ENCODE measurements at regions of chr4 and their contacts with region 1.

Region 1: DNA sequence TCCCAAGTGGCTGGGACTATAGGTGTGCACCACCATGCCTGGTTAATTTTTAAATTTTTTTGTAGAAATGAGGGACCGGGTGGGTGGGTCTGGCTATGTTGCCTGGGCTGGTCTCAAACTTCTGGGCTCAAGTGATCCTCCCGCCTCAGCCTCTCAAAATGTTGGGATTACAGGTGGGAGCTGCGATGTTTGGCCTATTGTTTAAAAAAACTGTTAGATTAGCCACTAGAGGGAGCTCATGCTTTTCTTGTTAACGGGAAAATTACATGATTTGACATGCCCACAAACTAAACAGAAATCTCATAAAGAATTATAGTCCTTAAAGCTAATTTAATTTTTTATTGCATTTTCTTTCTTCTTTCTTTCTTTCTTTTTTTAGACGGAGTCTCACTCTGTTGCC is 5.0 kb upstream of the SDAD1 start:
- DNase-seq: no peak
- H3K4me3 Mint-ChIP-seq: no peak overlapping the region
- H3K27ac Mint-ChIP-seq: no peak overlapping the region
- H3K4me1 Mint-ChIP-seq: peaks cover 6% of the 10 kb centered on the region
- H3K27me3 Mint-ChIP-seq: peaks cover 3% of the 10 kb centered on the region

Region 2: DNA sequence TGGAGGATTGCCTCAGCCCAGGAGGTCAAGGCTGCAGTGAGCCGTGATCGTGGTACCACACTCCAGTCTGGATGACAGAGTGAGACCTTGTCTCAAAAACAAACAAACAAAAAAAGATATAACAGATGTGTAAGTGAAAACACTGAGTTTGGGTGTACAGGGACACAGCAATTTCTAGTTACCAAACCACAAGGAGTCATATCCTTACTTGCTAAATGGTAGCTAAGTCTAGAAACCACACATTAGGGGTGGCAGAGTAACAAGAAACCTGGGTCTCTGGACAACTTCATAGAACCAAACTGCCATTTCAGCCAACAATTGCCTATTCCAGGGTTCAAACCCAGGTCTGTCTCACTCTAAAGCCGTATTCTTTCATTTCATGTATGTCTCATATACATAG is 114.3 kb before region 1 on chr4:
- CTCF ChIA-PET with region 1: no interaction called
- POLR2A ChIA-PET with region 1: no interaction called
- intact Hi-C with region 1: no loop called
- DNase-seq: no peak
- H3K4me3 Mint-ChIP-seq: no peak overlapping the region
- H3K27ac Mint-ChIP-seq: no peak overlapping the region
- H3K4me1 Mint-ChIP-seq: no peaks in the 10 kb centered on the region
- H3K27me3 Mint-ChIP-seq: no peaks in the 10 kb centered on the region

Region 3: GRCh38 chr4:76036855-76037254 is 41.1 kb after region 1 on chr4:
- CTCF ChIA-PET with region 1: interaction called, 13 read pairs
- POLR2A ChIA-PET with region 1: no interaction called
- intact Hi-C with region 1: no loop called
- DNase-seq: no peak
- H3K4me3 Mint-ChIP-seq: no peak overlapping the region
- H3K27ac Mint-ChIP-seq: no peak overlapping the region
- H3K4me1 Mint-ChIP-seq: peaks cover 3% of the 10 kb centered on the region
- H3K27me3 Mint-ChIP-seq: no peaks in the 10 kb centered on the region

Region 4: DNA sequence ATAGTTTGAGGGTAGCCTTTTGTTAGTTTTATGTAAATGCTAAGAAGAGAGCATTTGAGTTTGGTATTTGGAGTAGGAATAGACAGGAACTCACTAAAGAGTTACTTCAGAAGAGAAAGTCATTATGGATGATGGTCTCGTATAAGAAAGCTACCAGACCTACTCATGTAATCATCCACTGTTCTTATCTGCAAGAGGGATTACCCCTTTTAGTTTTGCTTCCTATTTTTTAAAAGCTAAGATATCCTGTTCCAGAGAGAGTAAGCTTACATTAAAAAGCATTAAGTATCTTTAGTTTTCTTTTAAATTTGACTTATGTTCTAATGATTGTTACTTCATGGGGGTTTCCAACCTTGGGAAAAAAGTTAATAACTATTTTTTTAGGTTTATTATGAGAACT is 66.3 kb after region 1 on chr4:
- CTCF ChIA-PET with region 1: interaction called, 93 read pairs
- POLR2A ChIA-PET with region 1: interaction called, 4 read pairs
- intact Hi-C with region 1: loop called (anchors 1 kb)
- DNase-seq: no peak
- H3K4me3 Mint-ChIP-seq: no peak overlapping the region
- H3K27ac Mint-ChIP-seq: no peak overlapping the region
- H3K4me1 Mint-ChIP-seq: peaks cover 48% of the 10 kb centered on the region
- H3K27me3 Mint-ChIP-seq: peaks cover 18% of the 10 kb centered on the region

Region 5: GRCh38 chr4:76074468-76074867 is 78.7 kb after region 1 on chr4 and contains the start of gene ART3:
- CTCF ChIA-PET with region 1: interaction called, 54 read pairs
- POLR2A ChIA-PET with region 1: interaction called, 4 read pairs
- intact Hi-C with region 1: no loop called
- DNase-seq: no peak
- H3K4me3 Mint-ChIP-seq: no peak within 1 kb of the TSS
- H3K27ac Mint-ChIP-seq: no peak within 1 kb of the TSS
- H3K4me1 Mint-ChIP-seq: no peaks in the 10 kb centered on the region
- H3K27me3 Mint-ChIP-seq: peaks cover 1% of the 10 kb centered on the region
- total RNA-seq, gene ART3: 0.36 TPM in 1 of 2 experiments, not detected in the other

Region 6: DNA sequence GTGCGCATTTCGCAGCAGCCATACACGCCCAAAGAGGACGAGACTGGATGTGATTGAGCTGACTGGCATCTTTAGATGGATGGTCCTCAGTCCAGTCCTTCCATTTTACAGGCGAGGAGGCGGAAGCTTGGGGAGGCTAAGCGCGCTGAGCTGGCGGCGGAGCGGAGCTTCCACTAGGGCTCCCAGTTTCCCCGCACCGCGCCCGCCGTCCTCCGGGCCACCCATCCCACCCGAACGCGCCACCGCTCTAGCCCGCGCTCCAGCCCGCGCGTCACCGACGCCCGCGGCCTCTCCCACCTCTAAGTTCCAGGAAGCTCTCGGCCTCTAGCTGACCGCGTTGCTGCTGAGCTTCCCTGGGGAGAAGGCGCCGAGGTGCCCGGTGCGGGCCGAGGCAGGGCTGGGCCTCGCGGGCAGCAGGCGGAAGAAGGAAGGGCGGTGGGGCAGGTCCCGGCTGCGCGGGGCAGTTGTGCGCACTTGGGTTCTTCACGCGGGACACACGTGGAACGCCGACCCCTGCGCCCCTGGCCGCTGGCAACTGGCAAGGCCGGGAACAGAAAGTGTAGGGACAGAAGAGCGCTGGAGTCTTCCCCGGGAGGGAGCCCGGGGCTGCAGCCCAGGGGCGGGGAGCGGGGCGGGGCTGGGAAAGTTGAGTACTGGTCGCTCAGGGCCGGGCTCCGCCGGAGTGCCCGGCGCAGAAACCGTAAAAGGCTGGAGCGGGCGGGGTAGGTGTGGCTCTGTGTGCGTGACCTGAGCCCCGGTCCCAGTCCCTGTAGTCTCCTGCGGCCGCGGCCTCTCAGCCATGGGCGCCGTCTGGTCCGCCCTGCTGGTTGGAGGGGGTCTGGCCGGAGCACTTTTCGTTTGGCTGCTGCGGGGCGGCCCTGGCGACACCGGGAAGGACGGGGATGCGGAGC is 310.5 kb after region 1 on chr4 and contains the start of gene STBD1:
- CTCF ChIA-PET with region 1: no interaction called
- POLR2A ChIA-PET with region 1: no interaction called
- intact Hi-C with region 1: loop called (anchors 10 kb)
- DNase-seq: peak; percentile 46
- H3K4me3 Mint-ChIP-seq: peak within 1 kb of the TSS; percentile 75
- H3K27ac Mint-ChIP-seq: peak within 1 kb of the TSS; percentile 24
- H3K4me1 Mint-ChIP-seq: peaks cover 30% of the 10 kb centered on the region
- H3K27me3 Mint-ChIP-seq: peaks cover 3% of the 10 kb centered on the region
- total RNA-seq, gene STBD1: 0.63 to 0.67 TPM